ENCODE measurements at regions of chr1 and their contacts with region 1.

Region 1: DNA sequence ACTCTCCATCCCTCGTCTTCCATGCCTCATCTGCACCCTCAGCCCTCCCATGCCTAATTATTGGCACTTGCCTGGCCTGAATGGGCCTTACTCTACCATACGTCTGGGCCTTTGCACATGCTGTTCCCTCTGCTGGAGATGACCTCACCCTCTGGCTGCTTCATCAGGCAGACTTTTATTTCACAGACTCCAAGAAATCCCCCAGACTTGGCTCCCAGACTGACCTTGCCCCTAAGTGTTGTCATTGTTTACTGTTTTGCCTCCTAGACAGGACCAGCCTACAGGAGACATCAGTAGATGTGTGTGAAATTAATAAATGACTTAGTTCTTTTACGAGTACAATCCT is 5.2 kb upstream of the AHDC1 start:
- DNase-seq: no peak
- ATAC-seq: peak; percentile 11
- H3K4me3 ChIP-seq: peak overlapping the region in 1 of 5 experiments; percentile 35
- H3K4me3 Mint-ChIP-seq: no peak overlapping the region
- H3K27ac ChIP-seq: peak overlapping the region; percentile 62 to 76
- H3K27ac Mint-ChIP-seq: no peak overlapping the region
- H3K4me1 ChIP-seq: peaks cover 33 to 49% of the 10 kb centered on the region in 2 donors
- H3K4me1 Mint-ChIP-seq: peaks cover 28% of the 10 kb centered on the region
- H3K27me3 ChIP-seq: no peaks in the 10 kb centered on the region
- H3K27me3 Mint-ChIP-seq: no peaks in the 10 kb centered on the region
- CTCF ChIP-seq: no peak

Region 2: DNA sequence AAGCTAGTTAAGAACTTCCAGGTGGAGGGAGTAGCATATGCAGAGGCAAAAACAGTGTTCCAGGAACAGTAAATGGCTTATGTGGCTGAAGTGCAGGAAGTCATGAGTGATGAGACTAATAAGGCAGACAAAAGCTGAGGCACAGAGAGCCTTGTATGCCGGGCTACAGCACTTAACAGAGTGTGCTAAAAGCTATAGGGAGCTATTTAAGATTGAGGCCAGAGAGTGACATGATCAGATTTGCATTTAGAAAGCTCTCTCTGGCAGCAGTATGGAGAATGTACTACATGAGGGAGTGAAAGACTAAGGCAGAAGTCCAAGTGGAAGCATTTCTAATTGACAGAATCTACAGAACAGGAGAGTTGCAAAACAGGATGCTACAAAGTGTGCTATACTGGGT is 157.8 kb before region 1 on chr1:
- CTCF ChIA-PET with region 1: no interaction called
- POLR2A ChIA-PET with region 1: no interaction called
- intact Hi-C with region 1: no loop called
- DNase-seq: no peak
- ATAC-seq: no peak
- H3K4me3 ChIP-seq: no peak overlapping the region
- H3K4me3 Mint-ChIP-seq: no peak overlapping the region
- H3K27ac ChIP-seq: peak overlapping the region in 1 of 2 donors; percentile 18
- H3K27ac Mint-ChIP-seq: peak overlapping the region; percentile 15
- H3K4me1 ChIP-seq: peaks cover 22 to 26% of the 10 kb centered on the region in 2 donors
- H3K4me1 Mint-ChIP-seq: peaks cover 57% of the 10 kb centered on the region
- H3K27me3 ChIP-seq: no peaks in the 10 kb centered on the region
- H3K27me3 Mint-ChIP-seq: no peaks in the 10 kb centered on the region
- CTCF ChIP-seq: no peak

Region 3: GRCh38 chr1:27624467-27625178 is 15.4 kb after region 1 on chr1:
- CTCF ChIA-PET with region 1: interaction called, 22 read pairs
- POLR2A ChIA-PET with region 1: interaction called, 9 read pairs
- intact Hi-C with region 1: loop called (anchors 1 kb)
- DNase-seq: no peak
- ATAC-seq: no peak
- H3K4me3 ChIP-seq: peak overlapping the region; percentile 56 to 66 (median 63)
- H3K4me3 Mint-ChIP-seq: no peak overlapping the region
- H3K27ac ChIP-seq: peak overlapping the region; percentile 87 to 88
- H3K27ac Mint-ChIP-seq: no peak overlapping the region
- H3K4me1 ChIP-seq: peaks cover 74 to 91% of the 10 kb centered on the region in 2 donors
- H3K4me1 Mint-ChIP-seq: peaks cover 41% of the 10 kb centered on the region
- H3K27me3 ChIP-seq: no peaks in the 10 kb centered on the region
- H3K27me3 Mint-ChIP-seq: no peaks in the 10 kb centered on the region
- CTCF ChIP-seq: no peak

Region 4: DNA sequence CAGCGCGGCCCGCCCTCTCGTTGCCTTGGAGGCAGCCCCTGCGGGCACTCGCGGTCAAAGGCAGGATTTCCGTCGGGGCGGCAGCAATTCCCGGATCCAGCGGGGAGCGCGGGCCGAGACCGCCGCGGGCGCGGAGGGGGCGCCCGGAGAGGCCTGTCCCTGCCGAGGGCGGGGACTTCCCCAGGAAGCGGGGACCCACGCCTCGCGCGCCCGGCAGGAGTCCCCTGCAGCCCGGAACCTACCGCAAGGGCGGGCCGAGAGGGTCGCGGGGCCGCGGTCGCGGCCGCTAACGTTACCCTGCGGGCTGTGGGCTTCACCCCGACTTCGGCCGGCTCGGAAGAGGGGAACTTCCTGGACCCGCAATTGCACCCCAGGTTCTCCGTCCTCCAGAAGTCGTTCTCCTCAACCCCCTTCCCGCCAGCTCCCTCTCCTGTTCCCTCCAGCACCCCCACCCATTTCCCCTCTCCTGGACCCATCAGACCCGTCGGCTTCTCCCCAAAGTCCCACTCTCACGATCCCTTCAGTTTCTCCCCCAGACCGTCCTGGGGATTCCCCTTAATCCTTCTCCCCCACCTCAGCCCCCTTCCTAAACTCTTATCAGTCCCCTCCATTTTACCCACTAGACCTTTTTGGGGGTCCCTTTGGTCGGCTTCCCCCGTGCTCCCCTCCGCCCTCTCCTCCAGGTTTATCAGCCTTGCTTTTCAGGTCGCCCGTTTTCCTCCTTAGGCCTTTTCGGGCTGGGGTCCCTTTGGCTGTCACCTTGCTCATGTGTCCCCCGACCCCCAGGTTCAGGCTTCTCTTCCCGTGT is 25.2 kb after region 1 on chr1:
- CTCF ChIA-PET with region 1: interaction called, 7 read pairs
- POLR2A ChIA-PET with region 1: interaction called, 3 read pairs
- intact Hi-C with region 1: loop called (anchors 2 kb)
- DNase-seq: peak; percentile 74
- ATAC-seq: peak; percentile 12
- H3K4me3 ChIP-seq: peak overlapping the region; percentile 68 to 78 (median 72)
- H3K4me3 Mint-ChIP-seq: peak overlapping the region; percentile 88
- H3K27ac ChIP-seq: peak overlapping the region; percentile 90
- H3K27ac Mint-ChIP-seq: peak overlapping the region; percentile 94
- H3K4me1 ChIP-seq: peaks cover 71 to 96% of the 10 kb centered on the region in 2 donors
- H3K4me1 Mint-ChIP-seq: peaks cover 81% of the 10 kb centered on the region
- H3K27me3 ChIP-seq: no peaks in the 10 kb centered on the region
- H3K27me3 Mint-ChIP-seq: no peaks in the 10 kb centered on the region
- CTCF ChIP-seq: no peak